Heart left ventricle (tissue), 16 donors: ENCODE measurements at regions of chr3 and their contacts with region 1.

Region 1: DNA sequence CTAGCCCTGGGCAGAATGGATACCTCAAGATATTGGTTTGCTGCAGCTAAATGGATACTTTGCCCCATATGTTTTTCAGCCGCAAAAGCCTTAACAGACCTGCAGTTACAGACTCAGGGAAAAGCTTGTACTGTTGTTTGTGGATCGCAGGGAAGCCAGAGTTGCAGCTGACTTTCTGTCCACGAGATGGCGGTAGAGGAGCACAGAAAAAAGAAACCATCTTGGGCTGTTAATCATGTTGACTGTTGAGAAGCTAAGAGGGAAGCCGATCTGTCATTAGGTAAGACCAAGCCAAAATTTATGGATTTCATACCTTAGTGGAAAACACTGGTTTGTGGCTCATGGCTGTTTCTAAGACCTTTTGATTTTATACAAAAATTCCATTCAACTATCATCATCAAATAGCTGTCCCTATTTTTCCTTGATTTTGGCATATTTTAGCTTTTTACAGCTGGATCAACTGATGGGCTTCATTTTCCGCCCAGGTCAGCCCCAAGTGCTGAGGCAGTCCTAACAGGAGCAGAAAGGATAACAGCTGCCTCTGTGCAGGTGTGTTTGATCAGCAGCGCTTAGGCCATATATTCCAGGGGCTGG is 205.7 kb upstream of the ZPLD1 start:
- DNase-seq: peak; percentile 42 to 63 (median 54)
- ATAC-seq: peak; percentile 62 to 80 (median 73)
- H3K4me3 ChIP-seq: no peak overlapping the region
- H3K27ac ChIP-seq: no peak overlapping the region
- H3K4me1 ChIP-seq: peaks cover 0 to 21% (median 0%) of the 10 kb centered on the region in 12 donors
- H3K27me3 ChIP-seq: peaks cover 0 to 3% (median 0%) of the 10 kb centered on the region in 9 donors
- CTCF ChIP-seq: peak; percentile 87 to 97 (median 93)
- POLR2A ChIP-seq: no peak

Region 2: DNA sequence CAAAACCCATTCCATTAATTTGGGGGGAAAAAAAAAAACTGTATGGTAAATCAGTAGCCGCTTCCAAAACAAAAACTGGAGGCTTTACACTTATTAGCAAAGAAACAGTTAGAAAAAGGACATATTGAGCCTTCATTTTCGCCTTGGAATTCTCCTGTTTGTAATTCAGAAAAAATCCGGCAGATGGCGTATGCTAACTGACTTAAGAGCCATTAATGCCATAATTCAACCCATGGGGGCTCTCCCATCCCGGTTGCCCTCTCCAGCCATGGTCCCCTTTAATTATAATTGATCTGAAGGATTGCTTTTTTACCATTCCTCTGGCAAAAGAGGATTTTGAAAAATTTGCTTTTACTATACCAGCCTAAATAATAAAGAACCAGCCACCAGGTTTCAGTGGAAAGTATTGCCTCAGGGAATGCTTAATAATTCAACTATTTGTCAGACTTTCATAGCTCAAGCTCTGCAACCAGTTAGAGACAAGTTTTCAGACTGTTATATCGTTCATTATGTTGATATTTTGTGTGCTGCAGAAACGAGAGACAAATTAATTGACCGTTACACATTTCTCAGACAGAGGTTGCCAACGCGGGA is 533.3 kb before region 1 on chr3:
- intact Hi-C with region 1: loop called in 4 of 10 experiments (anchors 5 to 10 kb)
- DNase-seq: no peak
- ATAC-seq: no peak
- H3K4me3 ChIP-seq: no peak overlapping the region
- H3K27ac ChIP-seq: no peak overlapping the region
- H3K4me1 ChIP-seq: peaks cover 0 to 5% (median 0%) of the 10 kb centered on the region in 12 donors
- H3K27me3 ChIP-seq: no peaks in the 10 kb centered on the region
- CTCF ChIP-seq: peak; percentile 58 to 82 (median 70)
- POLR2A ChIP-seq: no peak

Region 3: DNA sequence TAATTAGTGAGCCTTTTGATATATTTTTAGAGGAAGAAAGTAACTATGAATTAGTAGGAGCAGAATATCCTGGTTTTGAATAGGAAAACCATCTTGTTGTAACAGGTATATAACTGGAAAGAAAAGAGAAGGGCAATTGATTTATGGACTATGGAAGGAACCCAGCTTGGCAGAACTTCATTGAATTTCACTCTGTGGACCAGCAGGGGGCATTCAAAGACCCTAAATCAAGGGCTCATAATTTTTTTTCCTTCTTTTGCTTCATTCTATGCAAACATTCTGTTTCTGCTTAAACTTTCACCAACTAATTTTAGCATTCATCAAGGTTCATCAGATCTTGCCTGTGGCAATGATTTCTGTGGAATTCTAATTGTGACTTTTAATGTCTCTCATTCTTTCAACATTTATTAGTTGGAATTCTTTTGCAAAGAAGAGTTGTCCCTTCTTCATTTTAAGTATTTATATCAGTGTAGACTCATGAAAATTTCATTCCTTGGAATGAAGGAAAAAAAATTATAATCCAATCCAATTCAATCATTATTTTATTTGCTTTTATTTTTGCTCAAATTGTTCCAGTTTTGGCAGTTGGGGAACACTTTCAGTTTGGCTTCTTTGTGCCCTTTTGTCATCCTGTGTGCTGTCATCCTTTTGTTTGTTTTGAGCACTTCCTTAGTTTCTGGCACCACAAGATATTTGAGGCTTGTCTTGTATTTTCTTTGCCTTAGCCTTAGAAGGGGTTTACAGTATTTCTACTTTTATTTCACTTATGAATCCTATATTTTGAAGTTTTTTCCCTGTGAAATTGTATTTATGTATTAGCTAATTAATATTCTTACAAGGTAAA is 419.8 kb before region 1 on chr3:
- intact Hi-C with region 1: loop called (anchors 1 to 2 kb)
- DNase-seq: no peak
- ATAC-seq: peak in 2 of 4 donors; percentile 39 to 51
- H3K4me3 ChIP-seq: no peak overlapping the region
- H3K27ac ChIP-seq: peak overlapping the region in 2 of 12 donors; percentile 31 to 63
- H3K4me1 ChIP-seq: peaks cover 0 to 28% (median 15%) of the 10 kb centered on the region in 12 donors
- H3K27me3 ChIP-seq: no peaks in the 10 kb centered on the region
- CTCF ChIP-seq: peak; percentile 45 to 79 (median 70)
- POLR2A ChIP-seq: no peak

Region 4: DNA sequence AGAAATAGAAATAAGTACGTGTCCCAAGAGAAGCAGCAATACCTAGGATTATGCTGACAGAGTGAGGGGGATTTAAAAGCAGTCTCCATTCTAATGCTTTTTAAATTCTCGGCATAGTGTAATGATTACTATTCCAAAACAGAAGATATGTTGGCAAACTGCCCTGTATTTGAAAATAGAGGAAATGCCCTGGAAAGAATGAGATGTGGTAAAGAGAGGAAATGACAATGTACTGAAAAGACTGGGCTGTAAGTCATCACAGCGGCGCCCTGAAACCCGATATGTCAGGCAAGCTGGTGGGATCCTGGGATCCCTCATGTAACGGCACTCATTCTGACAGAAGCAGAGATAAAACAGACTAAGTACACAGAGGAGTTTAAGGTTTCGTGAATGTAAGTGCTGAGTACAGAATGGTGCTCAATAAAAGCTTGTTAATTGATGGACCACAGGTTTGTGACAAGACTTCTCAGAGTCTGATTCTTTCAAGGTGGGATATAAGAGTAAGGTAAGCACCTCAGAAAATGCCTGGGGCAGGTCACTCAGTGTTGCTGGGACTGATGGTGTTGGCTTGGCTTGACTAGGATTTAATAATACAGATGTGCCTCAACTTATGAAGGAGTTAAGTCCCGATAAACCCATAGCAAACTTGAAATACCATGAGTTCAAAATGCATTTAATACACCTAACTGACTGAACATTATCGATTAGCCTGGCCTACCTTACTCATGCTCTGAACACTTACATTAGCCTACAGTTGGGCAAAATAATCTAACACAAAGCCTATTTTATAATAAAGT is 288.4 kb before region 1 on chr3:
- intact Hi-C with region 1: loop called in 1 of 10 experiments (anchors 10 kb)
- DNase-seq: peak; percentile 47 to 78 (median 72)
- ATAC-seq: peak; percentile 85 to 97 (median 94)
- H3K4me3 ChIP-seq: peak overlapping the region in 6 of 12 donors; percentile 1 to 22 (median 8)
- H3K27ac ChIP-seq: peak overlapping the region in 8 of 12 donors; percentile 17 to 82 (median 47)
- H3K4me1 ChIP-seq: peaks cover 0 to 73% (median 27%) of the 10 kb centered on the region in 12 donors
- H3K27me3 ChIP-seq: no peaks in the 10 kb centered on the region
- CTCF ChIP-seq: no peak
- POLR2A ChIP-seq: no peak

Region 5: GRCh38 chr3:102006812-102007485 is 222.2 kb before region 1 on chr3:
- intact Hi-C with region 1: loop called in 1 of 10 experiments (anchors 10 kb)
- DNase-seq: peak in 4 of 5 donors; percentile 25 to 41 (median 34)
- ATAC-seq: peak; percentile 20 to 91 (median 80)
- H3K4me3 ChIP-seq: no peak overlapping the region
- H3K27ac ChIP-seq: peak overlapping the region in 6 of 12 donors; percentile 1 to 44 (median 22)
- H3K4me1 ChIP-seq: peaks cover 0 to 13% (median 0%) of the 10 kb centered on the region in 12 donors
- H3K27me3 ChIP-seq: no peaks in the 10 kb centered on the region
- CTCF ChIP-seq: no peak
- POLR2A ChIP-seq: no peak

Region 6: GRCh38 chr3:102129760-102130608 is 99.2 kb before region 1 on chr3:
- intact Hi-C with region 1: no loop called
- DNase-seq: peak in 2 of 5 donors; percentile 26 to 39
- ATAC-seq: peak; percentile 76 to 92 (median 84)
- H3K4me3 ChIP-seq: no peak overlapping the region
- H3K27ac ChIP-seq: peak overlapping the region; percentile 15 to 81 (median 58)
- H3K4me1 ChIP-seq: peaks cover 0 to 13% (median 8%) of the 10 kb centered on the region in 12 donors
- H3K27me3 ChIP-seq: no peaks in the 10 kb centered on the region
- CTCF ChIP-seq: no peak
- POLR2A ChIP-seq: no peak

Region 7: DNA sequence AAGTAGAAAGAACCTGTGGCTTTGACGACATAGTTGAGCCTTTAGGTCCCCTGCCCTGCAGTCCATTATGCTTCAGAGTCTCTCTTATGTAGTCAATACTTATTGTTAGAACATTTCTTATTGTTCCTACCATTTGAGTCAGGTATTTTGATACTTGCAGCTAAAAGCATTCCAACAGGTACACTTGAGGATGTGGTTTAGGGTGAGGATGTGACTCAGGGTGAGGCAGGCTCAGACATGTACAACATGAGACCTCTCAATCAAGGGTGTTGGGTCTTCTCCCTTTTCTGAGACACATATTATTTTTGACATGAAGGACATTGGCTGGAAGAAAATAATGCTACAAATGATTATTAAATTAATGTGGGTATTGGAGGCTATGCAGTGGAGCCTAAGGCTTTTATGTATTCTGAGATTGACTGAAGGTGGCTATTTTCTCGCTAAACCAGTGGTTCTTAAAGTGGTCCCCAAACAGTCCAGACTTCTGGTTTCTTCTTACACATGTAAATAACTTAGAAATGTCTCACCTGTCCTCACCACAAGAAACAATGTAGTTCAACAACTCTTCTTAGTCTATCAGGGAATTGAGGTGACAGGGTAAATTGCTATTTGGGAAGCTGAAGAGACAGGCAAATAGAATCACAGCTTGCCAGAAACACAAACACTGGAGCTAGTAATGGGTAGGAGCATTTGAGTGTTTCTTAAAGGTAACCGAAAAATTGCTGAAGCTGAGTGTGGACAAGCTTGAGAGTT is 70.1 kb after region 1 on chr3:
- intact Hi-C with region 1: no loop called
- DNase-seq: no peak
- ATAC-seq: no peak
- H3K4me3 ChIP-seq: no peak overlapping the region
- H3K27ac ChIP-seq: no peak overlapping the region
- H3K4me1 ChIP-seq: no peaks in the 10 kb centered on the region
- H3K27me3 ChIP-seq: no peaks in the 10 kb centered on the region
- CTCF ChIP-seq: no peak
- POLR2A ChIP-seq: no peak

Region 8: DNA sequence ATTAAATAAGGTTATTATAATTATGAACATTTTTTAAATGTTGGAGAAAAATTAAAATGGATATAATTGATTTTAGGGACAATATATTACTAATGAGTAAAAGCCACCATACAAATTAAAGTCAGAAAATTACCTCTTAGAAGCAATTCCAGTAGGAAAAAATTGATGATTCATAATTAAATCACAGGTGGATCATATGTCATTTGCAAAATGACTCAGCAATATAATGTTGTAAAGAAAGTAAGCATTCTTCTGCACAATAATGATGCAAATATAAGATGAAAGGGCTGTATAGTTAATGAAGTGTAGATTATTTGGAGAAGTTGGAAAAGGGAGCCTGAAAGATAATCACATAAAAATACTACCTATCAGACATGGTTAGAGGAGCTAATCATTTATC is 231.4 kb after region 1 on chr3:
- intact Hi-C with region 1: no loop called
- DNase-seq: no peak
- ATAC-seq: no peak
- H3K4me3 ChIP-seq: no peak overlapping the region
- H3K27ac ChIP-seq: no peak overlapping the region
- H3K4me1 ChIP-seq: no peaks in the 10 kb centered on the region
- H3K27me3 ChIP-seq: peaks cover 0 to 3% (median 0%) of the 10 kb centered on the region in 9 donors
- CTCF ChIP-seq: no peak
- POLR2A ChIP-seq: no peak

Region 9: GRCh38 chr3:102536456-102536855 is 307.3 kb after region 1 on chr3:
- intact Hi-C with region 1: loop called in 9 of 10 experiments (anchors 1 to 2 kb)
- DNase-seq: no peak
- ATAC-seq: no peak
- H3K4me3 ChIP-seq: no peak overlapping the region
- H3K27ac ChIP-seq: no peak overlapping the region
- H3K4me1 ChIP-seq: peaks cover 0 to 3% (median 0%) of the 10 kb centered on the region in 12 donors
- H3K27me3 ChIP-seq: peaks cover 0 to 4% (median 0%) of the 10 kb centered on the region in 9 donors
- CTCF ChIP-seq: peak; percentile 10 to 62 (median 38)
- POLR2A ChIP-seq: no peak